HAP-1 (cell line): ENCODE measurements at regions of chr17 and their contacts with region 1.

Region 1: DNA sequence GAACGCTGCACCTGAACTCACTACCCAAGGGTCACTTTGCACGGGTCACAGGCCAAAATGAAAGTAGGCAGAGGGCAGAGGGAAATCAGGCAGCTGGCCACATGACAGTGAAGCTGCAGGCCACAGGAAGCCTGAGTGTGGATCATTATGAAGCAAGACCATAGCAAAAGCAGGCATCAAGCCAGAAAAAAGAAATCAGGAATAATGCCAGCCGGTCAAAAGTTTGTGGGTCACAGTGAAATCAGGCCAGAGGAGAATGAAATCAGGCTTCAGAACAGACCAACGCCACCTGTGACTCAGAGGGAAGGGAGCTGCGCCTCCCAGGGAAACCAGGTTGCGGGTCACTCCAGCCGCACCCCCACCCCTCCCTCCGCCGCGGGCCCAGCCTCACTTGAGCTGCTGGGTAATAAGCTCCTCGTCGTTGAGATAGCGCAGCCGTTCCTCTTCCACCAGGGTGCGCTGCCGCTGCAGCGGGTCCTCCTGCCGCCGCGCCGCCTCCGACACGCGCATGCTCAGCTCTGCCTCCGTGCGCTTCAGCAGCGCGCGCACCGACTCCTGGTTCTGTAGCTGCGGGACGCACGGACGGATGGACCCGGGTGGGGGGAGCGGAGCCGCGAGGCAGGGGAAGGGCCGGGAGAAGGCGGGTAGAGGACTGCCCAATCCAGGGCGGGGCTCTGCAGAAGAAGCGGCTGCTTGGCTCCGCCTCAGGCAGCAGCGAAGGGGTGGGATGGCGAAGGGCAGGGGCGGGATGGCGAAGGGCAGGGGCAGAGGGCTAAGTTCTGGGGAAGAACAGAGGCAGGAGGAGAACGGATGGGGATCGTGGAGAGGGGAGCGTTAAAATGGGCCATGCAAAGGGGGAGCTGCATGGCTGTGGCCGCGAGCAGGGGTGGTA is 47.7 kb downstream of the SRCIN1 start:
- DNase-seq: peak; percentile 92 to 96
- H3K4me3 ChIP-seq: peak overlapping the region; percentile 27
- H3K4me1 ChIP-seq: peaks cover 19% of the 10 kb centered on the region
- H3K27me3 ChIP-seq: peaks cover 13% of the 10 kb centered on the region

Region 2: GRCh38 chr17:38498186-38498752 is 59.8 kb before region 1 on chr17:
- in situ Hi-C with region 1: no loop called
- DNase-seq: no peak
- H3K4me3 ChIP-seq: no peak overlapping the region
- H3K4me1 ChIP-seq: no peaks in the 10 kb centered on the region
- H3K27me3 ChIP-seq: no peaks in the 10 kb centered on the region

Region 3: GRCh38 chr17:38617011-38617867 is 59.2 kb after region 1 on chr17:
- in situ Hi-C with region 1: loop called (anchors 10 kb)
- DNase-seq: no peak
- H3K4me3 ChIP-seq: no peak overlapping the region
- H3K4me1 ChIP-seq: no peaks in the 10 kb centered on the region
- H3K27me3 ChIP-seq: no peaks in the 10 kb centered on the region

Region 4: DNA sequence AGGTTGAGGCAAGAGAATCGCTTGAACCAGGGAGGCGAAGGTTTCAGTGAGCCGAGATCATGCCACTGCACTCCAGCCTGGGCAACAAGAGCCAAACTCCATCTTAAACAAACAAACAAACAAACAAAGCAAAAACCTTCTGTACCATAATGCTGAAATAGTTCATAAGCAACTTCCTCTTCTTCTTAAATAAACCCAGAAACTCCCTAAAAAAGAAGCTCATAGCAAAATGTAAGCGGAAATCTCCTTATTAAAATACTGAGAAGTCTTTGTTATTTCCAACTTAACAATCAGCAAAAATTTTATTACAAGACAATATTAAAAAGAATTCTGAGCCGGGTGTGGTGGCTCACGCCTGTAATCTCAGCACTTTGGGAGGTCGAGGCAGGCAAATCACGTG is 760.6 kb after region 1 on chr17:
- in situ Hi-C with region 1: no loop called
- DNase-seq: no peak
- H3K4me3 ChIP-seq: no peak overlapping the region
- H3K4me1 ChIP-seq: no peaks in the 10 kb centered on the region
- H3K27me3 ChIP-seq: no peaks in the 10 kb centered on the region